SK-N-SH (cell line): ENCODE measurements at regions of chr1 and their contacts with region 1.

Region 1: GRCh38 chr1:205523891-205524793 is 19.7 kb downstream of the CDK18 start:
- DNase-seq: peak; percentile 87
- H3K4me3 ChIP-seq: peak overlapping the region in 1 of 2 experiments; percentile 14; a peak in 1 of 4 replicates
- H3K27ac ChIP-seq: no peak overlapping the region
- H3K4me1 ChIP-seq: peaks cover 0 to 12% of the 10 kb centered on the region in 2 experiments; a peak in 2 of 4 replicates
- H3K27me3 ChIP-seq: no peaks in the 10 kb centered on the region
- CTCF ChIP-seq: peak; percentile 81
- EP300 ChIP-seq: no peak
- RAD21 ChIP-seq: peak; percentile 98

Region 2: GRCh38 chr1:205248793-205249601 is 275.1 kb before region 1 on chr1:
- CTCF ChIA-PET with region 1: no interaction called
- POLR2A ChIA-PET with region 1: no interaction called
- DNase-seq: peak; percentile 58
- H3K4me3 ChIP-seq: no peak overlapping the region
- H3K27ac ChIP-seq: peak overlapping the region in 1 of 2 experiments; percentile 40; a peak in 1 of 4 replicates
- H3K4me1 ChIP-seq: peaks cover 7 to 20% of the 10 kb centered on the region in 2 experiments; a peak in 1 of 4 replicates
- H3K27me3 ChIP-seq: no peaks in the 10 kb centered on the region
- CTCF ChIP-seq: no peak
- EP300 ChIP-seq: no peak
- RAD21 ChIP-seq: no peak

Region 3: GRCh38 chr1:205273551-205273982 is 250.6 kb before region 1 on chr1:
- CTCF ChIA-PET with region 1: interaction called, 12 read pairs
- POLR2A ChIA-PET with region 1: no interaction called
- DNase-seq: peak; percentile 91
- H3K4me3 ChIP-seq: no peak overlapping the region; a peak in 1 of 4 replicates
- H3K27ac ChIP-seq: no peak overlapping the region
- H3K4me1 ChIP-seq: peaks cover 3 to 10% of the 10 kb centered on the region in 2 experiments; a peak in 3 of 4 replicates
- H3K27me3 ChIP-seq: no peaks in the 10 kb centered on the region
- CTCF ChIP-seq: peak; percentile 95
- EP300 ChIP-seq: no peak
- RAD21 ChIP-seq: peak; percentile 97

Region 4: DNA sequence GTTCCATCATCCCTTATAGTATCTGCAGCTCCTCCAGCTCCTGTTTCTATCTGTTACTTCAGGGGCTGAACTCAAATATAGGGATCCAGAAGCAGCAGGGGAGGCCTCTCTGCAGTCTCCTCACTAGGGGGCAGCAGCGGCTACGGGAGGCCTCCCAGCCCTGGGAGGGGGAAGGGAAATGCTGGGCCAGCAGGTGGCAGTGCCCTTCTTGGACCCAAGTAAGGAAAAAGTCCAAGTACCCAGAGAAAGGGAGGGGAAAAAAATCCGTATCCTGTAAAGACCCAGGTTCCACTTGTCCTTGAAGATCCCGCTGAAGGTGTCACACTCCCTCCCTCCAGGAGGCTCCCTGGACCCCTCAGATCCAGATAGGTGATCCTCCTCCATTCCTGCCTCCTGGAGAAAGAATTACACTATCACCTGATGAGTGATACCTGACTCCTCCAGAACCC is 188.5 kb before region 1 on chr1:
- CTCF ChIA-PET with region 1: interaction called, 41 read pairs
- POLR2A ChIA-PET with region 1: no interaction called
- DNase-seq: peak; percentile 90
- H3K4me3 ChIP-seq: peak overlapping the region in 1 of 2 experiments; percentile 42; a peak in 1 of 4 replicates
- H3K27ac ChIP-seq: no peak overlapping the region
- H3K4me1 ChIP-seq: no peaks in the 10 kb centered on the region
- H3K27me3 ChIP-seq: no peaks in the 10 kb centered on the region; the same call in 1 of the 2 replicates
- CTCF ChIP-seq: peak; percentile 98
- EP300 ChIP-seq: no peak
- RAD21 ChIP-seq: peak; percentile 79

Region 5: DNA sequence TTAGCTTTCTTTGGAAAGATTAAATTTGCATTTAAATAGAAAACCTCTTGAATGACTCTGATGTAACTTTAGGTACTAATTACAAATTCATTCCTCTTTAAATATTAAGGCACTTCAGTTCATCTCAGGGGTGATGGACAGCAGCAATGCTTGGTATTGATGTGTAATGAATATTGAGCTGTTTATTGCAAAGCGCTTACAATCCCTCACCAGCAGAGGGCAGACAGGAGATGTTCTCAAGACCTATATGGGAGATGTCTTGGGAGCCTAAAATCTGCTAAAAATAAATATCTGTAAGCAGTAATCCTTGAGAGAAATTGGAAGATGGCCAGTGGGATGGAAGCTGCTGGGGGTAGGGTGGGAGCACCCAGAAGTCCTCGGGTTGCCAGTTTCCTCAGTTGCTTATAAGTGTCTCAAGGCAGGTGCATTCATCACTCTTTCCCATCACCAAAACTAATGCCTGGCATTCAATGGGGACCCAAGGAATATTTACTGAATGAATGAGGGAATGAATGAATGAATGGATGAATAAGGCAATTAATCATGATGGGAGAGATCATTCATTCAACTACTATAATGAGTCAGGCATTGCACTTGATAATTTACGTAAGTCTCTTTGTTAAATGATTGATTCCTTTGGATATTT is 169.8 kb before region 1 on chr1:
- CTCF ChIA-PET with region 1: interaction called, 58 read pairs
- POLR2A ChIA-PET with region 1: no interaction called
- DNase-seq: peak; percentile 56
- H3K4me3 ChIP-seq: no peak overlapping the region
- H3K27ac ChIP-seq: no peak overlapping the region
- H3K4me1 ChIP-seq: peaks cover 0 to 8% of the 10 kb centered on the region in 2 experiments; a peak in 1 of 4 replicates
- H3K27me3 ChIP-seq: no peaks in the 10 kb centered on the region; the same call in 1 of the 2 replicates
- CTCF ChIP-seq: peak; percentile 96
- EP300 ChIP-seq: no peak
- RAD21 ChIP-seq: peak; percentile 67

Region 6: DNA sequence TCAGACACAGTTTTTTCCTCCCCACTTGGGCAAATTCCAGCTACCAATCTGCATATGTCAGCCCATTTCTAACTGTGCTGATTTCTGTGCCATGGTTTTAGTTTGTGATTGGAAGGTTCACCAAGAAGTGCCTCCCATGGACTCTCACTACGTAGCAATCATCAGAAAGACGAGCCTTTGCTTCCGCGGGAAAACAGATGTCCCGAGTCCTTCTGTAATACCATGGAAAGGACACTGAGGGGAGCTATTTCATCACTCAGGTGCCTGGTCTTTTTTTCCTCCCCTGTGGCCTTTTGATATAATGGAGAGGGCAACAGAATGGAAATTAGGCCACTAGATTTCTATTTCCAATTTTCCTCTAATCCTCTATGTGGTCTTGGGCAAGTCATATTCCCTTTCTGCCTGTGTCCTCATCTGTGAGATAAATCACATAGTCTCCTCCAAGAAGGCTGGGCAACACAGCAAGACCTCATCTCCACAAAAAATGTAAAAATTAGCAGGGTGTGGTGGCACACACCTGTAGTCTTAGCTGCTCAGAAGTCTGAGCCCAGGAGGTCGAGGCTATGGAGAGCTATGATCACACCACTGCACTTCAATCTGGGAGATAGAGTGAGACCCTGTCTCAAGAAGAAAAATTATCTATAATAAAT is 127.0 kb before region 1 on chr1:
- CTCF ChIA-PET with region 1: interaction called, 72 read pairs
- POLR2A ChIA-PET with region 1: no interaction called
- DNase-seq: peak; percentile 75
- H3K4me3 ChIP-seq: peak overlapping the region in 1 of 2 experiments; percentile 38; a peak in 1 of 4 replicates
- H3K27ac ChIP-seq: no peak overlapping the region
- H3K4me1 ChIP-seq: no peaks in the 10 kb centered on the region
- H3K27me3 ChIP-seq: no peaks in the 10 kb centered on the region; the same call in 1 of the 2 replicates
- CTCF ChIP-seq: peak; percentile 65
- EP300 ChIP-seq: no peak
- RAD21 ChIP-seq: peak; percentile 94

Region 7: DNA sequence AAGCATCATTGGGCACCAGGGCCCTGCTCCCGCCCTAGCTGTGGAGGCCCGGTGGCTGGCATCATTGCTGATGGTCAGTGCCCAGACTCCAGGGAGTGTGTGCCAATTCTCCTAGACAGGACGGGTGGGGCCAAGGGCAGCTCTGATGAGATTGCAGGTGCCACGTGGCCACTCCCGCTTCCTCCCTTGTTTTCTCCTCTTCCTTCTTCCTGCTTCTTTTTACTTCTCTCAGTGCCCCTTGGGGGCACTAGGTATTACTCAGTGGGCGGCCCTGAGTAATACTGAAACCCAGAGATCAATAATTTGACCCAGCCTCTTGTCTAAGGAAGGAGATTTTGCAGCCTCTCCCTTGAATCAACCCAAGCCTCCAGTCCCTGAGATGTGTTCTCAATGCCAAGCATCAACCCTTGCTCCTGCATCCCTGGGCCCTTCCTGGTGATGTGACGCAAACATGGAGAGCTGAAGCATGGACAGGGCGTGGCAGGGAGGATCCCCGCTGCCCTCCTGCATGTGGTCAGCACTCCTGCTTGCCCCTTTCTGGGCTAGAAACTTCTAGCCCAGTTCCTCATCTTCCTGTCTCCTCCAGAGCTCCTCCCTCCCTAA is 12.7 kb after region 1 on chr1:
- CTCF ChIA-PET with region 1: interaction called, 31 read pairs
- POLR2A ChIA-PET with region 1: no interaction called
- DNase-seq: no peak
- H3K4me3 ChIP-seq: no peak overlapping the region
- H3K27ac ChIP-seq: no peak overlapping the region
- H3K4me1 ChIP-seq: peaks cover 0 to 12% of the 10 kb centered on the region in 2 experiments; a peak in 1 of 4 replicates
- H3K27me3 ChIP-seq: no peaks in the 10 kb centered on the region
- CTCF ChIP-seq: no peak
- EP300 ChIP-seq: no peak
- RAD21 ChIP-seq: no peak

Region 8: GRCh38 chr1:205554026-205554811 is 30.1 kb after region 1 on chr1:
- CTCF ChIA-PET with region 1: interaction called, 12 read pairs
- POLR2A ChIA-PET with region 1: no interaction called
- DNase-seq: no peak
- H3K4me3 ChIP-seq: no peak overlapping the region
- H3K27ac ChIP-seq: no peak overlapping the region
- H3K4me1 ChIP-seq: no peaks in the 10 kb centered on the region
- H3K27me3 ChIP-seq: no peaks in the 10 kb centered on the region; the same call in 1 of the 2 replicates
- CTCF ChIP-seq: no peak
- EP300 ChIP-seq: no peak
- RAD21 ChIP-seq: no peak